ENCODE measurements at regions of chr5 and their contacts with region 1.

Region 1: DNA sequence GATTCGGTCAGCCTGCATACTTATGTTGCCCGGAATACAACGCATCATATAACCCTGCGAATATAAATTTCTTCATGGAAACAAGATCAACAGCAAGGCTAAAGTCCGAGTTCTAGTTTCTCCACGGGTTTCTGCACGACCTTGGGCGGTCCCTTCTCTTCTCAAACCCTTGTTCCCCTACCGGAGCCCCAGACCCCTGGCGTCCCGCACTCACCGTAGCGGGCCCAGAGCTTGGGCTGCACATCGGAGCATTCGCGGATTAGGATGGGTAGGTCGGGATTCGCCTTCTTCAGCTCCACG is 438 bp downstream of the NDUFA2 start:
- DNase-seq: no peak
- ATAC-seq: no peak
- H3K4me3 ChIP-seq: peak overlapping the region; percentile 78
- H3K4me3 Mint-ChIP-seq: peak overlapping the region; percentile 100
- H3K27ac ChIP-seq: peak overlapping the region; percentile 89
- H3K27ac Mint-ChIP-seq: peak overlapping the region; percentile 94 to 99
- H3K4me1 ChIP-seq: peaks cover 20% of the 10 kb centered on the region
- H3K4me1 Mint-ChIP-seq: peaks cover 31 to 46% of the 10 kb centered on the region in 2 donors
- H3K27me3 ChIP-seq: no peaks in the 10 kb centered on the region
- H3K27me3 Mint-ChIP-seq: no peaks in the 10 kb centered on the region
- CTCF ChIP-seq: no peak

Region 2: GRCh38 chr5:140302786-140303639 is 344.0 kb before region 1 on chr5 and contains the start of gene PFDN1:
- intact Hi-C with region 1: no loop called
- DNase-seq: peak; percentile 83 to 97
- ATAC-seq: peak; percentile 98 to 100 (median 99)
- H3K4me3 ChIP-seq: peak within 1 kb of the TSS; percentile 88
- H3K4me3 Mint-ChIP-seq: peak within 1 kb of the TSS; percentile 99
- H3K27ac ChIP-seq: peak within 1 kb of the TSS; percentile 73
- H3K27ac Mint-ChIP-seq: peak within 1 kb of the TSS; percentile 93 to 95
- H3K4me1 ChIP-seq: peaks cover 11% of the 10 kb centered on the region
- H3K4me1 Mint-ChIP-seq: peaks cover 14 to 21% of the 10 kb centered on the region in 2 donors
- H3K27me3 ChIP-seq: no peaks in the 10 kb centered on the region
- H3K27me3 Mint-ChIP-seq: peaks cover 6% of the 10 kb centered on the region in 2 donors
- CTCF ChIP-seq: no peak
- total RNA-seq, gene PFDN1: 28.0 to 39.1 (median 37.6) TPM

Region 3: GRCh38 chr5:140557136-140557805 is 89.7 kb before region 1 on chr5 and contains the start of gene SRA1:
- intact Hi-C with region 1: loop called (anchors 2 kb)
- DNase-seq: peak; percentile 89 to 90
- ATAC-seq: peak; percentile 87 to 96 (median 93)
- H3K4me3 ChIP-seq: peak within 1 kb of the TSS; percentile 86
- H3K4me3 Mint-ChIP-seq: peak within 1 kb of the TSS; percentile 84
- H3K27ac ChIP-seq: peak within 1 kb of the TSS; percentile 94
- H3K27ac Mint-ChIP-seq: peak within 1 kb of the TSS; percentile 96
- H3K4me1 ChIP-seq: peaks cover 23% of the 10 kb centered on the region
- H3K4me1 Mint-ChIP-seq: peaks cover 47 to 53% of the 10 kb centered on the region in 2 donors
- H3K27me3 ChIP-seq: no peaks in the 10 kb centered on the region
- H3K27me3 Mint-ChIP-seq: no peaks in the 10 kb centered on the region
- CTCF ChIP-seq: no peak
- total RNA-seq, gene SRA1: 42.2 to 66.4 (median 59.4) TPM

Region 4: DNA sequence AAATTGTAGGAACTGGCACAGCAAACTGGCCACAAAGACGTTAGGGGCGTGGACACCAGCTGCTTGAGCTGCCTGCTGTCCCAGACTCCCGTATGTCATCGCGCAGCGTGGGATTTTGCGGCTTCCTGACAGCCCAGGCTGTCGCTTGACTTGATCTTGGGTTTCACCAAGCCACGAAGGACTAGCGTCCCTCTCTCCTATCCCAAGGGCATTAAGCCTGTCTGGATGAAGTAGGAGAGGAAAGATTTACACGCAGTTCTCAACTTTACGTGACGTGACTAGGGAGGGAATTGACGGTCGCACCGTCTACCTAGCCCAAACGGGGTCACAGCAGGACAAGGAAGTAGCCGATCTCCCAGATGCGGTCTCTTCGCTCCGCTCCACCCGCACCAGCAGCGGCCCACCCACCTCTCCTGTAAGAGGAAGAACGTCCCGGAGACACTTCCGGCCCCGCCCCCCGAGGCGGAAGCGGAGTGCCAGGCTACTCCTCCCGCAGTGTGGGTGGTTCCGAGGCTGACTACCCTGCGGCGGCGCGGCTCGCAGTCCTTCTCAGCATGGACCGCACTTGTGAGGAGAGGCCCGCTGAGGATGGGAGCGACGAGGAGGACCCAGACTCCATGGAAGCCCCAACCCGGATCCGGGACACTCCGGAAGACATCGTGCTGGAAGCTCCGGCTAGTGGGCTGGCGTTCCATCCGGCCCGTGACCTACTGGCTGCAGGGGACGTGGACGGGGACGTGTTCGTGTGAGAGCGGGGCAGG is 17.5 kb after region 1 on chr5 and contains the start of gene WDR55:
- intact Hi-C with region 1: loop called (anchors 1 kb)
- DNase-seq: peak; percentile 86 to 97
- ATAC-seq: peak; percentile 95 to 97 (median 95)
- H3K4me3 ChIP-seq: peak within 1 kb of the TSS; percentile 99
- H3K4me3 Mint-ChIP-seq: peak within 1 kb of the TSS; percentile 99
- H3K27ac ChIP-seq: peak within 1 kb of the TSS; percentile 90
- H3K27ac Mint-ChIP-seq: peak within 1 kb of the TSS; percentile 96
- H3K4me1 ChIP-seq: peaks cover 21% of the 10 kb centered on the region
- H3K4me1 Mint-ChIP-seq: peaks cover 33 to 38% of the 10 kb centered on the region in 2 donors
- H3K27me3 ChIP-seq: no peaks in the 10 kb centered on the region
- H3K27me3 Mint-ChIP-seq: no peaks in the 10 kb centered on the region
- CTCF ChIP-seq: no peak
- total RNA-seq, gene WDR55: 42.3 to 45.1 (median 43.3) TPM